Activated CD4-positive, alpha-beta T cell treated with anti-CD3 and anti-CD28 coated beads, Interleukin-2, amount 10 ng/mL, durations not matched to agents 24 days and 14 days (primary cell): ENCODE measurements at regions of chr20 and their contacts with region 1.

Region 1: DNA sequence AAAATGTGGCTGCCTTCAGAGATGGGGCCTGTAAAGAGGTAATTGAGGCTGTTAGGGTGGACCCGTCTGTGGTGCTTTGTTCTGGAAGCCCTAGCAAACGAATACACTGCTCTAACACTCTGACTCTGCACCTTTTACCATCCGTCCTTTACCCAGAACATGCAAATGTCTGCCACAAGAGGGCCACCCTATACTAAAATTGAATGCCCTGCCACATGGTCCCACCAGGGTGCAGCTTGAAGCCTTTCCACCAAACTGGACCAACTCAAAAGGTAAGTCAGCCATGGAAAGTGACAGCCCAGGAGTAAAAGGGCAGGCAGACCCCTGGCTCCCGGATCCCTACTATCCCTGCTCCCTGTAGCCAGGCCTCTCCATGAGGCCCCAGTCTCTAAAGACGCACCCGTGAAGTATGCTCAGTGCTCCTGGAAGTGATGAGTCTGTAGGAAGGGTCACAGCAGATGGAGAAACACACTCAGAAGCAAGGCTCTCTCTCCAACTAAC is 5.8 kb upstream of the BFSP1 start:
- DNase-seq: peak; percentile 91
- H3K4me3 Mint-ChIP-seq: no peak overlapping the region
- H3K27ac Mint-ChIP-seq: no peak overlapping the region
- H3K4me1 Mint-ChIP-seq: peaks cover 26% of the 10 kb centered on the region
- H3K27me3 Mint-ChIP-seq: peaks cover 25% of the 10 kb centered on the region

Region 2: DNA sequence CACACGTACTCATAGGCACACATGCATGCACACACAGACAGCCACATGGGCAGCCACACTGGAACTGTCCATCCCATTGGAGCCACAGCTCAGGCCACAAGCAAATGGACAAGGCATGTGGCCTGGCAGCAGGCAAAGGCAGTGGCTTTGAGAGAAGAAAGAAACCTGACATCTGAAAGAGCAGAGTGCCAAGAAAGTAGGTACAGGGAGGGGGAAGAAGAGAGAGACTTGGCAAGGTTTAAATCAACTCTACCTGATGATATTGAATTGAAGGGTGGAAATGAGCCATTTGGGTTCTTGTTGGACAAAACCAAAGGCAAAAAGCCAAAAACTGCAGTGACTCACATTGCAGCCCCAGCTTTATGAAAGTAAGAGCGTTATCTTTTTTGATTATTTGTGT is 167.5 kb before region 1 on chr20:
- intact Hi-C with region 1: no loop called
- DNase-seq: no peak
- H3K4me3 Mint-ChIP-seq: no peak overlapping the region
- H3K27ac Mint-ChIP-seq: no peak overlapping the region
- H3K4me1 Mint-ChIP-seq: no peaks in the 10 kb centered on the region
- H3K27me3 Mint-ChIP-seq: no peaks in the 10 kb centered on the region

Region 3: GRCh38 chr20:17431621-17432364 is 105.2 kb before region 1 on chr20:
- intact Hi-C with region 1: no loop called
- DNase-seq: peak; percentile 81
- H3K4me3 Mint-ChIP-seq: no peak overlapping the region
- H3K27ac Mint-ChIP-seq: no peak overlapping the region
- H3K4me1 Mint-ChIP-seq: peaks cover 4% of the 10 kb centered on the region
- H3K27me3 Mint-ChIP-seq: peaks cover 15% of the 10 kb centered on the region

Region 4: DNA sequence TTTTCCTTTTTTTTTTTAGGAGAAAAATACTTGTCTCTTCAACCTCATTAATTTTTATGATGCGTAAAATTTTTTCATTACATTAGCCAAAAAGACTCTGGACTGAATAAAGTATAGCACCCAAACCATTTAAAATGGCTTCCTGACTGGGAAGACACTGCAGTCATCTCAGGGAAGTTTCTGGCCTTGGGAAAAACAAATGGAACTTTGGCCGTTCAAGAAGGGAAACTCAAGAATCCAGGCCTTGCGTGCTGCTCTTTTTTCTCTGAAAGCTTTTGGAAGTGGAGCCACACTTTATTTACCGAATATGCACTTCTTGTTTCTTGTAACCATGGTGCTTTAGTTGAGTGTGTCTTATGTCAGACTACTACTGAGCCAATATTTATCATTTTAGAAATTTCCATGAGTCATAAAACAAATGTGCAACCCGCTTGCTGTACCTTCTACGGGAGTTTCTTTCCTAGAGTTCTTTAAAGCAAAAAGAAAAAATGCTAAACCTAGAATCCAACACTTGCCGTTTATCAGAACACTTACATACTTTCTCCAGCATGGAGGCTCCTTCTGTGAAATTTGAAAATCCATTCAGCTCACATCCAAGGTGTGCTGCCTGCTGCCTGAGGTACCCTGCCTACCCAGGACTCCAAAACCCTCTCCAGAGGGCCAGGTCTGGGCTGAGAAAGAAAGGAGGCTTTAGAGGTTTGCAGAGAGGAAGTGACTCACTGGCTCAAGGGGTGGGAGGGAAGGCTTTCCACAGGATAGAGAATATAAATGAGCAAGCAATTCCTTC is 21.4 kb after region 1 on chr20:
- intact Hi-C with region 1: loop called (anchors 1 kb)
- DNase-seq: peak; percentile 71
- H3K4me3 Mint-ChIP-seq: peak overlapping the region; percentile 74
- H3K27ac Mint-ChIP-seq: peak overlapping the region; percentile 97
- H3K4me1 Mint-ChIP-seq: peaks cover 36% of the 10 kb centered on the region
- H3K27me3 Mint-ChIP-seq: no peaks in the 10 kb centered on the region

Region 5: DNA sequence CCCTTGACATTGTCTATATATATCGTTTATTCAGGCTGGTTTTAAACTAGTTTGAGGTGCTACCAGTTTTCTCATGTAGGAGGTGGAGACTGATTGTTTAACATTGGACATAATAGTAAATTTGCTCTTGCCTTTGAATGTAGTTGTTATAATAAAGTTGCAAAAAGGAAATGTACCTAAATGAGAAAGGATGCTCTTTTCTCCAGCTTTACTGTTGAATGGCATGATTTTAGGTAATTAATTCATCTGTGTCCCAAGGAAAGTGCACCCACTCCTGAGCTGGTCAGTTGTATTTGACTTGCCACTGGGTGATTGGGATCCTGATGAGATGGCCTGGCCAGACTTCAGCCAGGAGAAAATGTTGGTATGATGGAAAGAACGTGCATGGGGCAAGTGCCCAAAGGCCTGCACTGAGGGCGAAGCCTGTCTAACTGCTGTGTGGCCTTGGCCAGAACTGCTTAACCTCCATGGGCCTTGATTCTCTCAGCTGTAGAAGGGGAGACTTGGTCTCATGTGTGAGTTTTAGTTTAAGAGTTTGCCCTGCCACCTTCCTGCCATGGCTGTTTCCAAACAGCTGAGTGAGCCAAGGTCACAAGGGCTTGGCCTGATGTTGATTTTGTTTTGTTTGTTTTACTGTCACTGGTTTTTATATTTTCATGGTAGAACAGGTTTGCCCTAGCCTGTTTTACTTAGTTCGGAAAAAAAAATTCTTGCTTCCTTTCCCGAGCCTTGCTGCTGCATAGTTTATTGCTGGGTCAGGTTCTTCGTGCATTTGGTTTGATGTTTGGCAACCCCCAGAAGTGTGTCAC is 68.1 kb after region 1 on chr20:
- intact Hi-C with region 1: no loop called
- DNase-seq: no peak
- H3K4me3 Mint-ChIP-seq: no peak overlapping the region
- H3K27ac Mint-ChIP-seq: peak overlapping the region; percentile 6
- H3K4me1 Mint-ChIP-seq: peaks cover 14% of the 10 kb centered on the region
- H3K27me3 Mint-ChIP-seq: no peaks in the 10 kb centered on the region

Region 6: GRCh38 chr20:17617551-17618223 is 80.7 kb after region 1 on chr20:
- intact Hi-C with region 1: loop called (anchors 1 kb)
- DNase-seq: peak; percentile 82
- H3K4me3 Mint-ChIP-seq: no peak overlapping the region
- H3K27ac Mint-ChIP-seq: no peak overlapping the region
- H3K4me1 Mint-ChIP-seq: no peaks in the 10 kb centered on the region
- H3K27me3 Mint-ChIP-seq: no peaks in the 10 kb centered on the region

Region 7: GRCh38 chr20:18496740-18497592 is 960.0 kb after region 1 on chr20 and contains the start of gene RBBP9:
- intact Hi-C with region 1: no loop called
- DNase-seq: peak; percentile 93
- H3K4me3 Mint-ChIP-seq: peak within 1 kb of the TSS; percentile 99
- H3K27ac Mint-ChIP-seq: peak within 1 kb of the TSS; percentile 93
- H3K4me1 Mint-ChIP-seq: peaks cover 20% of the 10 kb centered on the region
- H3K27me3 Mint-ChIP-seq: no peaks in the 10 kb centered on the region
- total RNA-seq, gene RBBP9: 21.1 and 24.3 TPM in 2 replicates